Caco-2 (cell line): ENCODE measurements at regions of chr18 and their contacts with region 1.

Region 1: GRCh38 chr18:13159579-13159978 is 59.0 kb upstream of the LDLRAD4 start:
- DNase-seq: peak in 1 of 2 experiments; percentile 70
- H3K4me3 ChIP-seq: no peak overlapping the region
- H3K4me3 Mint-ChIP-seq: no peak overlapping the region
- H3K27ac Mint-ChIP-seq: no peak overlapping the region
- H3K4me1 ChIP-seq: no peaks in the 10 kb centered on the region
- H3K4me1 Mint-ChIP-seq: no peaks in the 10 kb centered on the region
- H3K27me3 ChIP-seq: no peaks in the 10 kb centered on the region; the same call in 1 of the 2 replicates
- H3K27me3 Mint-ChIP-seq: peaks cover 2% of the 10 kb centered on the region
- CTCF ChIP-seq: peak; percentile 73 to 83

Region 2: GRCh38 chr18:12574494-12575185 is 584.9 kb before region 1 on chr18:
- CTCF ChIA-PET with region 1: no interaction called
- POLR2A ChIA-PET with region 1: no interaction called
- intact Hi-C with region 1: no loop called
- DNase-seq: no peak
- H3K4me3 ChIP-seq: no peak overlapping the region
- H3K4me3 Mint-ChIP-seq: peak overlapping the region; percentile 2
- H3K27ac Mint-ChIP-seq: peak overlapping the region; percentile 1
- H3K4me1 ChIP-seq: no peaks in the 10 kb centered on the region
- H3K4me1 Mint-ChIP-seq: peaks cover 19% of the 10 kb centered on the region
- H3K27me3 ChIP-seq: no peaks in the 10 kb centered on the region
- H3K27me3 Mint-ChIP-seq: no peaks in the 10 kb centered on the region
- CTCF ChIP-seq: no peak

Region 3: DNA sequence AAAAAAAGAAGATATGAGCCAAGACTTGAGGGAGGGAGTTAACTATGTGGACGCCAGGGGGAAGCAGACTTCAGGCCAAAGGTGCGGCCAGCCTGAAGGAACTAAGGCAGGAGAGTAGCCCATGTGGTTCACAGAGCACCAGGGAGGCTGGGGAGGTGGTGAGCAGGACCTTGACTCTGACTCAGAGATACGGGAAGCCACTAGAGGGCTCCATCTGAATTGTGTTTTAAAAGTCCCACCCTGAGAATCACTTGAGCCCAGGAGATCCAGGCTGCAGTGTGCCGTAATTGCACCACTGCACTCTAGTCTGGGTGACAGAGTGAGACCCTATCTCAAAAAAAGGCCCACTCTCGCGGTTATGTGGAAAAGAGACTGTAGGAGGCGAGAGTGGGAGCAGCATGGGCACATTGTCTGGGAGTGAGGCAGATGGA is 156.1 kb before region 1 on chr18:
- CTCF ChIA-PET with region 1: interaction called, 10 read pairs
- POLR2A ChIA-PET with region 1: no interaction called
- intact Hi-C with region 1: loop called (anchors 1 kb)
- DNase-seq: peak; percentile 69 to 75
- H3K4me3 ChIP-seq: no peak overlapping the region
- H3K4me3 Mint-ChIP-seq: no peak overlapping the region
- H3K27ac Mint-ChIP-seq: no peak overlapping the region
- H3K4me1 ChIP-seq: peaks cover 4% of the 10 kb centered on the region; the same call in 1 of the 2 replicates
- H3K4me1 Mint-ChIP-seq: peaks cover 6% of the 10 kb centered on the region
- H3K27me3 ChIP-seq: no peaks in the 10 kb centered on the region
- H3K27me3 Mint-ChIP-seq: no peaks in the 10 kb centered on the region
- CTCF ChIP-seq: peak; percentile 42 to 50

Region 4: DNA sequence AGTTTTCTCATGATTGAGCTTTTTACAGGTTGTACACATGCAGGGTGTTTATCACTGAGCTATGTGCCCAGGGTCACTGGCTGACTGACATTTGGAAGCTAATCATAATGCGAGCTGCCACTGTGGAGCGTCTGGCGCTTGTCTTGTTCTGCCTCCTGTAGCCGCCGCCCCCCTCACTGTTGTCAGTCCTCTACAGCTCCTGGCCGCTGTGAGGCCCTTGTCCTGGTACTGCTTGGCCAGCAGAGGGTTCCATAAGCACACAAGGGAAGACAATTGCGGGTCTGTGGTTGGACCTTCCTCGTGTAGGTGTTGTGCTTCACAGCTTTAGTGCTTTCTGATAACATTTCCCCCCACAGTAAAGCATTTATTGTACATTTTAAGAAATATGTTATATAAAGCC is 46.6 kb before region 1 on chr18:
- CTCF ChIA-PET with region 1: interaction called, 72 read pairs
- POLR2A ChIA-PET with region 1: no interaction called
- intact Hi-C with region 1: loop called (anchors 1 kb)
- DNase-seq: peak; percentile 83 to 84
- H3K4me3 ChIP-seq: no peak overlapping the region
- H3K4me3 Mint-ChIP-seq: no peak overlapping the region
- H3K27ac Mint-ChIP-seq: no peak overlapping the region
- H3K4me1 ChIP-seq: no peaks in the 10 kb centered on the region
- H3K4me1 Mint-ChIP-seq: no peaks in the 10 kb centered on the region
- H3K27me3 ChIP-seq: no peaks in the 10 kb centered on the region
- H3K27me3 Mint-ChIP-seq: no peaks in the 10 kb centered on the region
- CTCF ChIP-seq: peak; percentile 64 to 79

Region 5: GRCh38 chr18:13137670-13138419 is 21.7 kb before region 1 on chr18:
- CTCF ChIA-PET with region 1: interaction called, 7 read pairs
- POLR2A ChIA-PET with region 1: no interaction called
- intact Hi-C with region 1: loop called (anchors 1 kb)
- DNase-seq: peak; percentile 87 to 94
- H3K4me3 ChIP-seq: peak overlapping the region; percentile 56
- H3K4me3 Mint-ChIP-seq: peak overlapping the region; percentile 98
- H3K27ac Mint-ChIP-seq: peak overlapping the region; percentile 72
- H3K4me1 ChIP-seq: peaks cover 6% of the 10 kb centered on the region
- H3K4me1 Mint-ChIP-seq: peaks cover 7% of the 10 kb centered on the region
- H3K27me3 ChIP-seq: no peaks in the 10 kb centered on the region
- H3K27me3 Mint-ChIP-seq: no peaks in the 10 kb centered on the region
- CTCF ChIP-seq: no peak

Region 6: DNA sequence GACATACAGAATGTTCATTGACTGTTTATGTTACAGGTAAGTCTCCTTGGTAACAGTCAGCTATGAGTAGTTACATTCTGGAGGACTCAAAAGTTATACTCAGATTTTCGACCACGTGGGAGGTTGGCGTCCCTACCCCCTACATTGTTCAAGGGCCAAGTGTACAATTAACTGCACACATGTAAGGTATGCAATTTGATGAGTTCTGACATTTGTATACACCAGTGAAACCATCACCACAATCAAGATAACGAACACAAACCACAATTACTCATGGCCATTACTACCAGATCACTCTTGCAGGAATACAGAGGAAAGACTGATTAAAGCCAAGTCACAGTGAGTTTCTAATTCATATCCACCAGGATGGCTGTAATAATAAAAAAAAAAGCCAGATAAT is 19.4 kb after region 1 on chr18:
- CTCF ChIA-PET with region 1: interaction called, 14 read pairs
- POLR2A ChIA-PET with region 1: no interaction called
- intact Hi-C with region 1: no loop called
- DNase-seq: no peak
- H3K4me3 ChIP-seq: no peak overlapping the region
- H3K4me3 Mint-ChIP-seq: no peak overlapping the region
- H3K27ac Mint-ChIP-seq: peak overlapping the region; percentile 39
- H3K4me1 ChIP-seq: peaks cover 19% of the 10 kb centered on the region
- H3K4me1 Mint-ChIP-seq: peaks cover 12% of the 10 kb centered on the region
- H3K27me3 ChIP-seq: no peaks in the 10 kb centered on the region
- H3K27me3 Mint-ChIP-seq: no peaks in the 10 kb centered on the region
- CTCF ChIP-seq: no peak

Region 7: GRCh38 chr18:13245481-13246000 is 86.0 kb after region 1 on chr18:
- CTCF ChIA-PET with region 1: no interaction called
- POLR2A ChIA-PET with region 1: no interaction called
- intact Hi-C with region 1: no loop called
- DNase-seq: no peak
- H3K4me3 ChIP-seq: no peak overlapping the region
- H3K4me3 Mint-ChIP-seq: no peak overlapping the region
- H3K27ac Mint-ChIP-seq: no peak overlapping the region
- H3K4me1 ChIP-seq: no peaks in the 10 kb centered on the region
- H3K4me1 Mint-ChIP-seq: no peaks in the 10 kb centered on the region
- H3K27me3 ChIP-seq: no peaks in the 10 kb centered on the region
- H3K27me3 Mint-ChIP-seq: peaks cover 16% of the 10 kb centered on the region
- CTCF ChIP-seq: no peak